Activated CD4-positive, alpha-beta T cell treated with anti-CD3 and anti-CD28 coated beads, Interleukin-2, amount 10 ng/mL, durations not matched to agents 24 days and 14 days (primary cell): ENCODE measurements at regions of chr17 and their contacts with region 1.

Region 1: DNA sequence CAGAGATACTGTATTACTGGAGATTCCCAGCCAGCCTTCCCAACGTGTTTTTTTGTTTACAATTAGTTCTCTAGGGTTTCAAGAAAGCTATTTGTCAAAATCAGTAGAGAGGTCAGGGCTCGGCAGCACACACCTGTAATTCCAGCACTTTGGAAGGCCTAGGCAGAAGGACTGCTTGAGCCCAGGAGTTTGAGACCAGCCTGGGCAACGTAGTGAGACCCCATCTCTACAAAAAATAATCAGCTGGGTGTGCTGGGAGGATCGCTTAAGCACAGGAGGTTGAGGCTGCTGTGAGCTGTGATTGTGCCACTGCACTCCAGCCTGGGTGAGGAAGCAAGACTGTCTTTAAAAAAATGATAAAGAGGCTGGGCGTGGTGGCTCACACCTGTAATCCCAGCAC is 19.4 kb downstream of the CBX1 start:
- DNase-seq: no peak
- H3K4me3 Mint-ChIP-seq: no peak overlapping the region
- H3K27ac Mint-ChIP-seq: no peak overlapping the region
- H3K4me1 Mint-ChIP-seq: peaks cover 2% of the 10 kb centered on the region
- H3K27me3 Mint-ChIP-seq: no peaks in the 10 kb centered on the region

Region 2: GRCh38 chr17:47987240-47987835 is 94.5 kb before region 1 on chr17:
- intact Hi-C with region 1: no loop called
- DNase-seq: no peak
- H3K4me3 Mint-ChIP-seq: no peak overlapping the region
- H3K27ac Mint-ChIP-seq: no peak overlapping the region
- H3K4me1 Mint-ChIP-seq: peaks cover 8% of the 10 kb centered on the region
- H3K27me3 Mint-ChIP-seq: no peaks in the 10 kb centered on the region

Region 3: GRCh38 chr17:48131216-48131824 is 49.5 kb after region 1 on chr17:
- intact Hi-C with region 1: loop called (anchors 2 kb)
- DNase-seq: peak; percentile 88
- H3K4me3 Mint-ChIP-seq: no peak overlapping the region
- H3K27ac Mint-ChIP-seq: peak overlapping the region; percentile 15
- H3K4me1 Mint-ChIP-seq: no peaks in the 10 kb centered on the region
- H3K27me3 Mint-ChIP-seq: no peaks in the 10 kb centered on the region